ENCODE measurements at regions of chr9 and their contacts with region 1.

Region 1: GRCh38 chr9:126198854-126199253 is 127.8 kb upstream of the MVB12B start:
- DNase-seq: no peak
- H3K4me3 ChIP-seq: no peak overlapping the region
- H3K27ac ChIP-seq: no peak overlapping the region
- H3K4me1 ChIP-seq: no peaks in the 10 kb centered on the region
- H3K27me3 ChIP-seq: peaks cover 4 to 12% of the 10 kb centered on the region in 2 experiments
- CTCF ChIP-seq: no peak
- POLR2A ChIP-seq: no peak

Region 2: GRCh38 chr9:126171641-126172040 is 27.2 kb before region 1 on chr9:
- CTCF ChIA-PET with region 1: no interaction called
- POLR2A ChIA-PET with region 1: no interaction called
- dilution Hi-C with region 1: no loop called
- intact Hi-C with region 1: loop called (anchors 1 kb)
- DNase-seq: no peak
- H3K4me3 ChIP-seq: no peak overlapping the region
- H3K27ac ChIP-seq: no peak overlapping the region
- H3K4me1 ChIP-seq: no peaks in the 10 kb centered on the region
- H3K27me3 ChIP-seq: peaks cover 0 to 2% of the 10 kb centered on the region in 2 experiments
- CTCF ChIP-seq: no peak
- POLR2A ChIP-seq: no peak

Region 3: DNA sequence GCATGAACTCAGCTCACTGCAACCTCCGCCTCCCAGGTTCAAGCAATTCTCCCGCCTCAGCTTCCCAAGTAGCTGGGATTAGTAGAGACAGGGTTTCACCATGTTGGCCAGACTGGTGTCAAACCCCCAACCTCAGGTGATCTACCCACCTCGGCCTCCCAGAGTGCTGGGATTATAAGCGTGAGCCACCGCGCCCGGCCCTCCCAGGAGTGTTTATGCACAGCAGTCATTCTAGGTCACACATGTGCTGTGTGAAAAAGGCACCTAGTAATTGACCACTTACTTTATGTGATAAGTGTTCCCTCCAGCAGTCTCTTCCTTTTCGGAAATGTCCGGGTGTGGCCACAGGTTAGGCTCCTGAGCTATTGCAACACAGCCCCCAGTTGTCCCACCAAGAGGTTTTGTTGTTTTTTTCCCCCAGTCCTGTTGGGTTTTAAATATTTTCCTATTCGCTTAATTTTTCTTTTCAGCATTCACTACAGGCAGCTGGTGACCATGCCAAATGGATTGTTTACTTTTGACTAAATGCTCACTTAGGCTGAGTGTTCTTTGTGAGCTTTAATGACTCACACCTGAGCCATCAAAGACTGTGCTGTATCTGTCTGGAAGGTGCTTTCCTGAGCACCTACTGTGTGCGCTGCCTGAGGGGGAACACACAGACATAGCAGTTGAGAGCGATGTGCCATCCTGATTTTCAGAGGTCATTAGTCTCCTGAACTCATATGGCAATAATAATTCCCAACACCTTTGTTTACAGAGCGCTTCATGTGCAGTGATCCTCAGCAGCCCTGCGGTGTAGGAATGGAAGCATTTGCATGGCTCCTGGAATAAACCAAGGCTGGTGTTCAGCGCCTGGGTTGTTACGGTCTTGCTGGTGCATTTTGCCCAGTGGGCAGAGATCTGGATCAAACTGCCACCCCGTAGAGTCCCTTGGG is 222.1 kb after region 1 on chr9:
- CTCF ChIA-PET with region 1: no interaction called
- POLR2A ChIA-PET with region 1: no interaction called
- dilution Hi-C with region 1: no loop called
- intact Hi-C with region 1: no loop called
- DNase-seq: no peak
- H3K4me3 ChIP-seq: no peak overlapping the region
- H3K27ac ChIP-seq: no peak overlapping the region
- H3K4me1 ChIP-seq: no peaks in the 10 kb centered on the region
- H3K27me3 ChIP-seq: no peaks in the 10 kb centered on the region
- CTCF ChIP-seq: no peak
- POLR2A ChIP-seq: no peak